Right ventricle myocardium inferior (tissue), 1 donor: ENCODE measurements at regions of chr17 and their contacts with region 1.

Region 1: GRCh38 chr17:77957857-77958715 is at the start of gene TNRC6C:
- DNase-seq: peak; percentile 100
- ATAC-seq: peak; percentile 99
- total RNA-seq, gene TNRC6C: 21.0 TPM

Region 2: GRCh38 chr17:77772461-77772897 is 185.6 kb before region 1 on chr17:
- intact Hi-C with region 1: loop called (anchors 2 kb)
- DNase-seq: peak; percentile 83
- ATAC-seq: peak; percentile 91

Region 3: DNA sequence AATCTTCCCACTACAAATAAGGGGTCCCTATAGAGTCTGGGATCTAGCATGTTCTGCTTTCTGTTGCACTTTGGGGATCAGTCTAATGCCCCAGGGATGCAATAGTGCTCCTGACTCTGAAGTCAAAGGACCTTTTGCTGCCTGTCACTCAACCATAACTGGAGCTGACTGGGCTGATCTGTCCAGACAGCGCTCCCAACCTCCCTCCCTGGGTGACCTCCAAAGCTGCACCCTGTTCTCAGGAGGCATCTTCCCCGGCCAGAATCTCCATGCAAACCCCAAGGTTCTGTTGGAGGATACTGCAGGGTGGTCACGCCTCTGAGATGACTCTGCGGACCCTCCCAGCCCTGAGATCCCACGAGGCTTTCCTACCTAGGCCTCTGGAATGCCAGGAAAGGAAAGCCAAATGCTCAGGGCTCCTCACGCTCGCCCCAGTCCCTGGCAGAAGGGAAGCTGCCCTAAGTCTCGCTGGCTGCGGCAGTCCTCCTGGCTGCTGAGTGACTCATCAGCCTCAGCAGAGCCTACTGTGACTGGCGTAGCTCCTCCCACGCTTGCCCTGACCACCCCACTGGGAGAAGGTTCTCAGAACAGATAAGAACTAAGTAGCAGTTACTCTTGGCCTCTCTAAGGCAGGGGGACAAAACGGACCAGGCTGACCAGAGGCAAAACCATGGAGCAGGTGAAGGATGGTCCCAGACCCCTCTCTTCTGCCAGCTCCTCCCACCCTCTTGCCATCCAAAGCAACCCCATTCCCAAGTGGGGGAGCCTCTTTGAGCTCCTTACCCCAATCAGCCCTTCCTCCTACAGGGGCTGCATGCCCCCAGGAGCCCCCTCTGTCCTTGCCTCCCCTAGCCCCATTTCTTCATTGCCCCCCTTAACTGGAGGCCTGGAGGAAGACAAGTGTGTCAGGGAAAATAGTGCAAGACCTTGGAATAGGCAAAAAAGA is 123.6 kb before region 1 on chr17:
- intact Hi-C with region 1: loop called (anchors 5 kb)
- DNase-seq: no peak
- ATAC-seq: peak; percentile 43

Region 4: DNA sequence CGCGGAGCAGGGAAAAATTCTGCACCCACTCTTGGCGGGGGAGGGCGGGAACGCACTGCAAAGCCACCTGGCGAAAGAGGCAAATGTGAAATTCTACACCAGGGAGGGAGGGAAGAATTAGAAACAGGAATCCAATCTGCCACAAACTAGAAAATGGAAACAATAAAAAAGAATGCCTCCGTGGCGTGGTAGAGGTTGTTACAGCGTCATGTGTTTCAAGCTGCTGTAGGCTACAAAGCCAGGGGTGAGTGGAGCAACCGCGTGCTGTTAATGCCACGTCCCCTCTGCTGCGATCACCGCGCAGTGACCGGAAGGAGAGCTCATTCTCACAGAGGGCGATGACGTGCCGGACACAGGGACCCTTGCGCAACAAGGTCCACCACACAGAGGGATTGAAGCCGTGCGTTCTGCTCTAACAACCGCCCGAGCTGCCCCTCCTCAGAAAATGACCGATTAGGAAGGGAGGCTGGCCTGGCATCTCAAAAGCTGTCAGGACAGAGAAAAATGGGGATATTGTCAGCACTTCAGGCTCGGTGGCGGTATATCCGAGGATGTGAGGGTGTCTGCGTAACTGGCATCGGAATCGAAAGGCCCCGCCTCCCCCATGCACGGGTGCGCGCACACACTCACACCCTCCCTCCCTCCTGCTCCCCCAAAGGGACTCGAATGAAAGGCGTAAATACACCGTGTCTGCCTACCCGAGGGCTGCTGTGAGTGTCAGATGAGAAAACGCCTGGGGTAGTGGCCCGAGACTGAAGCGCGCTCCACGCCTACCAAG is 70.4 kb before region 1 on chr17:
- intact Hi-C with region 1: loop called (anchors 5 kb)
- DNase-seq: peak; percentile 95
- ATAC-seq: peak; percentile 89

Region 5: DNA sequence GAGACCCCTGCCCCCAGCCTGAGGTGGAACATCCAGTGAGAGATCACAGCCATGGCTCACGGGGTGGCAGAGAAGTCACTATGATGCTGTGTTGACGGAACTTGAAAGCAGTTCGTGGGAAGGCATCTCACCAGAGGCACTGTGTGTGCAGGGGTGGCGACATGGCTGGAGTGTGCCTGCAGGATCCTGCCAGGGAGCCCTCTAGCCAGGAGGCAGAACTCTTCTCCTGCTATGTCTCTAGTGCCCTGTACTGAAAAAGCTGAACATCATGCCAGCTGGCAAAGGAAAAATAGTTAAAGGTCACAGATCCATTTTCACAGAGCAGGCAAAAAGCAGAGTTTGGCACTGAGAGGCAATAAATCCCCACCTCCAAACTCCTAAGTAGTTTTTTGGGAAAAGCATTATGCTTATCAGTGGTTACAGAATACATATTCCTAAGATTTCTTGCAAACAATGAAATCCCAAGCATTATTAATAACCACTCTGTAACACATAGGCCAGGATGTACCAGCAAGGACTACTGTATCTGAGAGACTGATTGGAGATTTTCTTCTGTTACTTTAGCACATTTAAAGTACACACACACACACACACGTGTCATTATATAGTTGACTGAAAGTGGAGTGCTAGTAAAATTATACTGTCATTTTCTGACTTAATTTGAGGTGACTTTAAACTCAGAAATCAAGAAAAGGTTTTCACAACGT is 37.2 kb after region 1 on chr17:
- intact Hi-C with region 1: loop called (anchors 1 kb)
- DNase-seq: no peak
- ATAC-seq: peak; percentile 96

Region 6: GRCh38 chr17:78013683-78014467 is 55.8 kb after region 1 on chr17:
- intact Hi-C with region 1: loop called (anchors 5 kb)
- DNase-seq: no peak
- ATAC-seq: peak; percentile 74